Cardiac septum (tissue), 1 donor: ENCODE measurements at regions of chr12 and their contacts with region 1.

Region 1: DNA sequence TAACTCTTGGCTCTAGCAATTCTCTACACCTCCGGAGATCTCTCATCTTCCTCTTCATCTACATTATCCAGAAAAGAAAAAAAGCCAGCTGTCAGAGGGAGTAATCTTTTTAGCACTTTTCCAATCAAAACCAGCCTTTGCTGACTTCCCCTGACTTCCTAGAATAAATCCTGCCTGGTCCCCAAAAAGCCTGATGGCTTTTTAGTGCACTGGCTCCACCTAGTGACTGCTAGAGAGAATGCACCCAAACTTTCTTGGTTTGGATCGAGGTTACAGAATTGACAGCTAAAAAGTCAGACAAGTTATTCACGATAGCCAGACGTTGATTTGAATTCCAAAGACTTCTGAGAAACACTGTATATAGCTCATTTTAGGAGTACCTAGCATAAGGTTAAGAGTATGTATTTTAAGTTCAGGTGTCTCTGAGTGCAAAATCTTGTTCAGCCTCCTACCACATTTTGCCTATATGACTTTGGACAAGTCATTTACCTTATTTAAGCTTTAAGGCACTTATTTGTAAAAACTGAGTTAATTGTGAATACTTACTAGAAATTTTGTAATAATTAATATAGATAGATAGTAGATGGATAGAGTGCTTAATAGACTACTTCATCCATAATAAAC is 185.7 kb upstream of the GRIN2B start:
- DNase-seq: no peak

Region 2: DNA sequence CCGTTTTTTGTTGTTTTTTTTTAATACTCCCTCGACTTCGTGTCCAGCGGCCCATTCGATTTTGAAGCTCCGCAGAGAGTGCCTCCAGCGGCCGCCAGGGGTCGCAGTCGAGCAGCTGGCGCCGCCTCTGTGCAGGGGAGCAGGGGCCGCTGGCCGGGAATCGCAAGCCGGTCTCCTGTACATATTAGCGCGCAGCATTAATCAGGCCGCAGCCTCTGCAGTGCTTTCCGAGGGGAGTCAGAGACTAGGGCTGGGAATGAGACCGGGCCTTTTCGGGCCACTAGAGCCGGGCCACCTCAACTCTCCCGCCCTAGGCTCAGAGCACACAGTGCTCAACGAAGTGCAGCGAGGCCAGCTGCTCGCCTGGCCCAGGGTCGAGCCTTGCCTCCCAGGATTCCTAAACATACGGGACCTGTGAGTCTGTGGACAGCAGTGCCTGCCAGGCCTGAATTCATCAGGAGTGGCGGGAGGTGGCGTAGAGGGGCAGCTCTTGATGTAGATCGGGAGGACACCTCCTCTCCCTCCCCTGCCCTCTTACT is 888.8 kb before region 1 on chr12:
- intact Hi-C with region 1: loop called (anchors 10 kb)
- DNase-seq: peak; percentile 87

Region 3: GRCh38 chr12:13734584-13735152 is 432.4 kb before region 1 on chr12:
- intact Hi-C with region 1: loop called (anchors 5 kb)
- DNase-seq: no peak

Region 4: DNA sequence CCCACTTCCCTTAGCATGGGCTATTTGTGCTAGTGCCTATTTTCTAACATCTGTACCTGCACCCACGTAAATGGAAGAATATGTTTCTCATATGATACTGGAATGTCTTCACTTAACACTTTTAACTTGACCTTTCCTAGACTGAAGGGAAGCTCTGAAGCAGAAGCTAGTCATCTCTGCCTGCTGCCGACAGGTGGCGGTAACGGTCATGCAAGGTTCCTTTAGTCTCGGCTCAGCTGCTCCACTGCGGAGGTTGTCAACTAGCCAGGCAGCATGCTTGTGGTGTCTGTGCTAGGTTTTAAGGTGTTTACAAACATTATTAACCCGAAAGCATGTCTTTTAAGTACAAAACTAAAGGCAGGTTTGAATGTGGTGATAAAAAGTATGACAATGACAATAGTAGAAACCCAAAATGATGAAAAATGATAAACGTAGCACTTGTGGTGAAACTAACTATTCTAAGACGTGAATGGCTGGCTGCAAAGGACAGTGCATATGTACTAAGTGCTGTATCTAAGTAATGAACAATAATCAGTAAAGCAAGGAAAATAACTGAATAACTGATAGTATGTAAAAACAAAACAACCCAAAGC is 302.9 kb before region 1 on chr12:
- intact Hi-C with region 1: loop called (anchors 5 kb)
- DNase-seq: peak; percentile 83